ENCODE measurements at regions of chr2 and their contacts with region 1.

Region 1: DNA sequence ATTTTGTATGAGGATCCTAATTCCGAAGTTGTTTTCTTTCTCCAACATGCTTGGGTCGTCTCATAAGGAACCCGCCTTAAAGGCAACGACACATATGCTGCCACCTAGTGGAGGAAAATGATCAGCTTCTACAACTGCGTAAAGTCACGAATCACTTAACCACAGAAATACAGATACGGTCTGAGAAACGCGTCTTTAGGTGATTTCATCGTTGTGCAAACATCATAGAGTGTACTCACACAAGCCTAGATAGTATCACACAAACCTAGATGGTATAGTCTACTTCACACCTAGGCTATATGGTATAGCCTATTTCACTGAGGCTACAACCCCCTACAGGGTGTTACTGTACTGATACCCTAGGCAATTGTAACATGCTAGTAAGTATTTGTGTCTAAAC is 13.1 kb downstream of the GNLY start:
- DNase-seq: peak; percentile 70
- H3K4me3 ChIP-seq: no peak overlapping the region
- H3K27ac ChIP-seq: no peak overlapping the region
- H3K4me1 ChIP-seq: peaks cover 0 to 4% of the 10 kb centered on the region in 2 experiments; a peak in 2 of 4 replicates
- H3K27me3 ChIP-seq: no peaks in the 10 kb centered on the region
- CTCF ChIP-seq: peak; percentile 95
- EP300 ChIP-seq: no peak
- RAD21 ChIP-seq: peak; percentile 69

Region 2: GRCh38 chr2:85428343-85428881 is 278.9 kb before region 1 on chr2:
- CTCF ChIA-PET with region 1: no interaction called
- POLR2A ChIA-PET with region 1: no interaction called
- DNase-seq: no peak
- H3K4me3 ChIP-seq: no peak overlapping the region
- H3K27ac ChIP-seq: no peak overlapping the region
- H3K4me1 ChIP-seq: peaks cover 0 to 32% of the 10 kb centered on the region in 2 experiments; a peak in 1 of 4 replicates
- H3K27me3 ChIP-seq: no peaks in the 10 kb centered on the region
- CTCF ChIP-seq: no peak
- EP300 ChIP-seq: no peak
- RAD21 ChIP-seq: no peak

Region 3: DNA sequence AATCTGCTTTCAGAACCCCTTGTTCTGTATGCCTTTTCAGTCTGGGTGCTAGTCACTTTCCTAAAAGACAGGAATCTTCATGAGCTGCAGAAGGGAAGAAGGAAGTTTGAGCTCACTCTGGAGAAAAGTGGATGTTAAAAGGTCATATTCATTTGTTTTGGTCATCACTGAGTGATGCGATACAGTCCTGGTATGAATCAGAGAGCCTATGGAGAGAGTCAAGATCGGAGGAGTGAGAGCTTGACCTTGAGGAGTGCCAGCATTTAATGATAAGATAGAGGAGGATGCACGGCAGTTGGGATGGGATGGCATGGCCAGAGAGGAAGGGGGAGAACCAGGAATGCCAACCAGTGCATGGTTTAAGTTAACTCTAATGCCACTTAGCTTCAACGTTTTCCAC is 71.7 kb before region 1 on chr2:
- CTCF ChIA-PET with region 1: interaction called, 85 read pairs
- POLR2A ChIA-PET with region 1: no interaction called
- DNase-seq: no peak
- H3K4me3 ChIP-seq: no peak overlapping the region
- H3K27ac ChIP-seq: peak overlapping the region in 1 of 2 experiments; percentile 13; a peak in 1 of 4 replicates
- H3K4me1 ChIP-seq: no peaks in the 10 kb centered on the region
- H3K27me3 ChIP-seq: no peaks in the 10 kb centered on the region
- CTCF ChIP-seq: no peak
- EP300 ChIP-seq: no peak
- RAD21 ChIP-seq: no peak

Region 4: GRCh38 chr2:85662899-85663593 is 44.3 kb before region 1 on chr2:
- CTCF ChIA-PET with region 1: interaction called, 24 read pairs
- POLR2A ChIA-PET with region 1: no interaction called
- DNase-seq: peak; percentile 32
- H3K4me3 ChIP-seq: no peak overlapping the region
- H3K27ac ChIP-seq: no peak overlapping the region
- H3K4me1 ChIP-seq: peaks cover 0 to 2% of the 10 kb centered on the region in 2 experiments; a peak in 1 of 4 replicates
- H3K27me3 ChIP-seq: no peaks in the 10 kb centered on the region
- CTCF ChIP-seq: no peak
- EP300 ChIP-seq: no peak
- RAD21 ChIP-seq: no peak

Region 5: DNA sequence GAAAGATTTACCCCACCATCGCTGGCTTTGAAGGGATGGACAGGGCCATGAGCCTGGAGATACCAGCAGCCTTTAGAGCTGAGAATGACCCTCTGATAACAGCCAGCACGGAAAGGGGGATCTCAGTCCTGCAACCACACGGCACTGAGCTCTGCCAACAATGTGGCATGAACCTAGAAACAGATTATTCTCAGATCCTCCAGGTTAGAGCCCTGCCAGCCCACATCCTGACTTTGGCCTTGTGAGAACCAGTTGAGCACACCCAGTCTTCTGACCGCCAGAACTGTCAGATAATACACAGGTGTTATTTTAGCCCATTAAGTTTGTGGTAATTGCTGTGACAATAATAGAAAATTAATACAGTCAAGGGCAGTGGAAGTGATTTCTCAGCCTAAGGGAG is 22.5 kb before region 1 on chr2:
- CTCF ChIA-PET with region 1: interaction called, 63 read pairs
- POLR2A ChIA-PET with region 1: no interaction called
- DNase-seq: no peak
- H3K4me3 ChIP-seq: no peak overlapping the region
- H3K27ac ChIP-seq: no peak overlapping the region
- H3K4me1 ChIP-seq: no peaks in the 10 kb centered on the region; a peak in 1 of 4 replicates
- H3K27me3 ChIP-seq: no peaks in the 10 kb centered on the region
- CTCF ChIP-seq: no peak
- EP300 ChIP-seq: no peak
- RAD21 ChIP-seq: no peak

Region 6: GRCh38 chr2:85723707-85724360 is 16.5 kb after region 1 on chr2:
- CTCF ChIA-PET with region 1: interaction called, 101 read pairs
- POLR2A ChIA-PET with region 1: no interaction called
- DNase-seq: no peak
- H3K4me3 ChIP-seq: no peak overlapping the region
- H3K27ac ChIP-seq: no peak overlapping the region
- H3K4me1 ChIP-seq: peaks cover 0 to 16% of the 10 kb centered on the region in 2 experiments; a peak in 2 of 4 replicates
- H3K27me3 ChIP-seq: no peaks in the 10 kb centered on the region
- CTCF ChIP-seq: no peak
- EP300 ChIP-seq: no peak
- RAD21 ChIP-seq: no peak

Region 7: DNA sequence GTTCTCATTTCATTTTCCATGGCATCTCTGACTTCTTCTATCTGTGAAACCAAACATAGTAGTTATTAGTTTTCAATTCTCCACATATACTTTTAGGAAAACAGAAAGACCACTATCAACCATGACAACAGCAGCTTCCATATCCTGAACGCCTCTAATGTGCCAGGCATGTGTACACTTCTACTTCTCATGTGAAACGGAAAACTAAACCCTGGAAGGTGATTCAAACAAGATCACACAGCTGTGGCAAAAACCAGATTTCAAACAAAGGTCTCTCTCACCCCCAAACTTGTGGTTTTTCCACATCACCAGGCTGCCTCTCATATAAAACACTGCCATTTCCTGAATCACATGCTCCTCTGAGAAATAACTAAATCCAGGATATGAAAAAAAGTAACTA is 440.5 kb after region 1 on chr2:
- CTCF ChIA-PET with region 1: no interaction called
- POLR2A ChIA-PET with region 1: no interaction called
- DNase-seq: no peak
- H3K4me3 ChIP-seq: no peak overlapping the region
- H3K27ac ChIP-seq: no peak overlapping the region
- H3K4me1 ChIP-seq: no peaks in the 10 kb centered on the region
- H3K27me3 ChIP-seq: no peaks in the 10 kb centered on the region
- CTCF ChIP-seq: no peak
- EP300 ChIP-seq: no peak
- RAD21 ChIP-seq: no peak

Region 8: DNA sequence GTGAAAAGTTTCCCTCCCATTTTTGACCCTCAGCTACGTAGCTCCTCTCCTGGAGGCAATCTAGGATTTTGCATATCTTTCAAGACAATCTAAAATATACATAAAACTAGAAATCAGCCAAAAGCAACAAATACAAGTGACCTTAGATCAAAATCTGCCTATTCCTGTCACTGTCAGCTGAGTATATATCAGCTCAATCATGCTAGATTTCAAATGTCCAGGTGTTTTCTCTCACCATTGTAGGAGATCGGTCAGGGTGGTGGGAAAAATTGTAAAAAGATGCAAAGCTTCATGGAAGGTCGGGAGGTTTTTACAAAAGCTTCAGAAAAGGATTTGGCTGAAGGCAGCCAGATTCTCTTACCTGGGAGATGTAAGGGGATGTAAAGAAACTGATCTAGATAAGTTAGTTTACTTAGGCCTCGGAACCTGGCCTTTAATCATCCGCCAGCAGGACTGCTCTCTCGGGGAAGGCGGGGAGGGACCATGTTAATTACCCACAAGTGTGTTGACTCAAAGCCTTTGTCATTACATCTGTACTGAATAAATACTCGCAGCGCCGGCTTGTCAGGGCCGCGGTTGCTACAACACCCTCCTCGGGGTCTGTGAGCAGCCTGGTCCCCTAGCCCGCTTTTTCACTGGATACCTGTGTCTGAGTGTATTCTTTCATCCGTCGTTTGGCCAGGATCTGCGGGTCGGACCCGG is 849.0 kb after region 1 on chr2:
- CTCF ChIA-PET with region 1: no interaction called
- POLR2A ChIA-PET with region 1: no interaction called
- DNase-seq: no peak
- H3K4me3 ChIP-seq: no peak overlapping the region
- H3K27ac ChIP-seq: no peak overlapping the region
- H3K4me1 ChIP-seq: no peaks in the 10 kb centered on the region; a peak in 1 of 4 replicates
- H3K27me3 ChIP-seq: no peaks in the 10 kb centered on the region
- CTCF ChIP-seq: no peak
- EP300 ChIP-seq: no peak
- RAD21 ChIP-seq: no peak

Measured in SK-N-SH (cell line).